ENCODE measurements at regions of chr16 and their contacts with region 1.

Region 1: GRCh38 chr16:55543472-55543871 is 23.0 kb upstream of the CAPNS2 start:
- DNase-seq: peak in 2 of 5 donors; percentile 49 to 64
- H3K4me3 ChIP-seq: no peak overlapping the region
- H3K27ac ChIP-seq: no peak overlapping the region
- H3K4me1 ChIP-seq: no peaks in the 10 kb centered on the region
- H3K27me3 ChIP-seq: no peaks in the 10 kb centered on the region
- CTCF ChIP-seq: peak; percentile 26

Region 2: DNA sequence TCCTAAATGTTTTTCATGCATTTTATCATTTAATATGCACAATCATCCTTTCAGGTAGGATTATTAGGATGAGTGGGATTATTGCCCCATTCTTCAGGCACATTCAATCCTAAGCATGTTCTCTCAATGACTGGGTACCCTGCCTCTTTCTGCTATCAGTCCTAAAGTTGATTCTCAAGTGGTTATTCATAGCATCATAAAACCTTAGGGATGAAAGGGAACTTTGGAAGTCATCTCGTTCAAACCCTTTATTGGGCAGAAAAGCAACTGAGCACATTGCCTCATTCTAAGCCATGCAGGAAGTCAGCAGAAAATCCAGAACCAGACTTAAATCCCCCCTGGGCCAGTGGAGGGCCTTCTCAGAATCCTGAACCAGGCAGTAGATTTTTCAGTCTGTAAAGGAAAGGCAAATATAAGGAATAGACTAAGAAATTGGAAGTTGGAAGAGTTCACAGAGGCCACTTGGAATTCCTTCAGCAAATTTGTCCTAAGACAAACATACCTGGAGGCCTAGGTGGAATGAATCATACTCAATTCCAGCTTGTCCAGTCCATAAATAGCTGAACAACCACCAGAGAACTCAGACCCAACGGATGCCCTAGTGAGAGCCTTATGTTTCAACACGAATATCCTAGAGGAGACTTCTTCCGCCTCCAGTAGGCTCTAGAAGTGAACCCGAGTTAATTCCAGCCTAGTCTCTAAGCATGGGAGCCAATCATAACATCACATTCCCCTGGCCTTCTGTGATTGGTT is 156.8 kb before region 1 on chr16:
- intact Hi-C with region 1: no loop called
- DNase-seq: no peak
- H3K4me3 ChIP-seq: no peak overlapping the region
- H3K27ac ChIP-seq: no peak overlapping the region
- H3K4me1 ChIP-seq: no peaks in the 10 kb centered on the region
- H3K27me3 ChIP-seq: no peaks in the 10 kb centered on the region
- CTCF ChIP-seq: no peak

Region 3: GRCh38 chr16:55465077-55465896 is 78.2 kb before region 1 on chr16:
- intact Hi-C with region 1: loop called (anchors 5 kb)
- DNase-seq: peak; percentile 89 to 93 (median 90)
- H3K4me3 ChIP-seq: no peak overlapping the region
- H3K27ac ChIP-seq: no peak overlapping the region
- H3K4me1 ChIP-seq: peaks cover 0 to 3% (median 0%) of the 10 kb centered on the region in 3 donors
- H3K27me3 ChIP-seq: no peaks in the 10 kb centered on the region
- CTCF ChIP-seq: peak; percentile 100

Region 4: DNA sequence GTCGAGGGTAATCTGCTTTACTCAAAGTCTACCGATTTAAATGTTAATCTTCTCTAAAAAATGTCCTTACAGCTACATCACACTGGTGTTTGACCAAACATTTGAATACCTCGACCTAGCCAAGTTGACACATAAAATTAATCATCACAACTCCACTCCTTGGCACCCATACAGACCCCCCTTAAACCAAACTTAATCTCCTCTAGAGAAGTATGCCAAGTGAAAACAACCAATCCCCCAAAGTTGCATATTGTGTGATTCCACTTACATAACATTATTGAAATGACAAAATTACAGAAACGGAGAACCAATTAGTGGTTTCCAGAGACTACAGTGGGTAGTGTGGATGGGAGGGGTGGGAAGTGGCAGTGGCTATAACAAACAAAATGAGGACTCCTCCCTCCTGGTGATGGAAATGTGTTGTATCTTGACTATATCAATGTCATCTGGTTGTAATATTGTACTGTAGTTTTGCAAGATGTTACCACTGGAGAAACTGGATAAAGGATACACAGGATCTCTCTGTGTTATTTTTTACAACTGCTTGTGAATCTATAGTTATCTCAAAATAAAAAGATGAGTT is 62.4 kb after region 1 on chr16:
- intact Hi-C with region 1: no loop called
- DNase-seq: no peak
- H3K4me3 ChIP-seq: no peak overlapping the region
- H3K27ac ChIP-seq: no peak overlapping the region
- H3K4me1 ChIP-seq: no peaks in the 10 kb centered on the region
- H3K27me3 ChIP-seq: no peaks in the 10 kb centered on the region
- CTCF ChIP-seq: no peak

Region 5: DNA sequence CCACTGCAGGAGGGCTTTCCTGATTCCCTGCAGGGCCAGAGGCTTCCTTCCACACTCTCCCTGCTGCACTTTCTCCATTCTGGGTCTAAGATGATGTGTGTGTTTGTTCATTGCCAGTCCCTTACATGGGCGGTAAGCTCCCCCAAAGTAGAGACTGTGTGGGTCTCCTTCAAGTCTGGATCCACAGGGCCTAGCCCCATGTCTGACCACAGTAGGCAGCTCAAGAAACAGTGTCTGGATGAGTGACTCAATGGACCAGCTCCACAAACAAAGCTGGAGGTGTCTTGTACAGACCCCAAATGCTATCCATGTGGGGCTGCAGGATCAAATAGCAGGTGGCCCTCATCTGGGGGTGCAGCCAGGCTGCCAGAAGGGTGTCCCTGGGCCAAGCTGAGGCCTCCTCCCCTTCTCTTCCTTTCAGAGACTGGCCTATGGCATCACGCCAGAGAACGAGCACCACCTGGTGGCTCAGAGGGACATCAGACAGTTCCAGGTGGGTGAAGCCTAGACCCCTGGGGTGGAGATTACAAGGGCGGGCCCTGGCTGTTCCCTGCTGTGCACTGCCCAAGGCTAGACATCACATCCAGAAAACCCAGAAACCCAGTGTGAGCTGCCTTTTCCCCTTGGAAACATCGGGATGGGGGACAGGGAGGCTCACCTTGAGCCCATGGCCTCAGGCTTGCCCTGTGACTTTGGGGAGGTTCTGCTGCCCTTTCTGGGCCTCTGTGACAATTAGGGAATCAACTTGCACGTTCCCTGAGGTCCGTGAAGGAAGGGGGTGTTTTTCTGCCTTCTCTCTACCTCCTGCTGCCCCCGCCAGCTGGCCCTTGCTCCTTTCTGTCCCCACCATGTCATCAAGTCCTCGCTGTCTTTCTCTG is 158.2 kb after region 1 on chr16:
- intact Hi-C with region 1: loop called (anchors 10 kb)
- DNase-seq: peak; percentile 55 to 77 (median 65)
- H3K4me3 ChIP-seq: no peak overlapping the region
- H3K27ac ChIP-seq: no peak overlapping the region
- H3K4me1 ChIP-seq: no peaks in the 10 kb centered on the region
- H3K27me3 ChIP-seq: no peaks in the 10 kb centered on the region
- CTCF ChIP-seq: peak; percentile 44

Measured in kidney (tissue), 22 donors.